Activated CD8-positive, alpha-beta memory T cell treated with anti-CD3 and anti-CD28 coated beads, Interleukin-2, amount 10 ng/mL, durations not matched to agents 7 days and 5 days (primary cell): ENCODE measurements at regions of chr3 and their contacts with region 1.

Region 1: GRCh38 chr3:183884427-183885296 is at the start of gene PARL:
- DNase-seq: peak; percentile 97
- ATAC-seq: peak; percentile 99
- H3K4me3 Mint-ChIP-seq: peak within 1 kb of the TSS; percentile 84
- H3K27ac Mint-ChIP-seq: peak within 1 kb of the TSS; percentile 80
- H3K4me1 Mint-ChIP-seq: peaks cover 26% of the 10 kb centered on the region
- H3K27me3 Mint-ChIP-seq: no peaks in the 10 kb centered on the region
- total RNA-seq, gene PARL: 48.2 to 62.3 TPM

Region 2: GRCh38 chr3:183468424-183468823 is 416.2 kb before region 1 on chr3:
- CTCF ChIA-PET with region 1: interaction called, 14 read pairs
- DNase-seq: no peak
- ATAC-seq: no peak
- H3K4me3 Mint-ChIP-seq: no peak overlapping the region
- H3K27ac Mint-ChIP-seq: peak overlapping the region; percentile 73
- H3K4me1 Mint-ChIP-seq: peaks cover 18% of the 10 kb centered on the region
- H3K27me3 Mint-ChIP-seq: peaks cover 5% of the 10 kb centered on the region

Region 3: DNA sequence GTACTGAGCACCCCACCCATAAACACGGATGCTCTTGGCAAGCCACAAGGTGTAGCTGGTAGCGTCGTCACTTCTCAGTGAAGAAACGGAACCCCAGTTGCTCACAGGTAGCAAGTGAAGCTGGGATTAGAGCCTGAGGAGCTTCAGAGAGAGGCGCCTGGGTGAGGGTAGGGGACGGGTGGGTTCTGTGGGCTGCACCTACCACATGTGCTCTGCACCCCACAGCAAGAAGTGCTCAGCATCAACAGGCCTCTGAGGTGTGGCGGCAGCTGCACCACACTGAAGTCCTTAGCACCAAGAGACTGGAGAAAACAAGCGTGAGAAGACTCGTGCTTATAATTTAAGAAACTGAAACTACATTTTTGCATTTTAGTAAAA is 69.1 kb before region 1 on chr3:
- CTCF ChIA-PET with region 1: interaction called, 11 read pairs
- DNase-seq: peak; percentile 56
- ATAC-seq: peak; percentile 67
- H3K4me3 Mint-ChIP-seq: no peak overlapping the region
- H3K27ac Mint-ChIP-seq: peak overlapping the region; percentile 85
- H3K4me1 Mint-ChIP-seq: peaks cover 23% of the 10 kb centered on the region
- H3K27me3 Mint-ChIP-seq: no peaks in the 10 kb centered on the region

Region 4: GRCh38 chr3:183825456-183826161 is 59.1 kb before region 1 on chr3 and contains the start of gene MAP6D1:
- CTCF ChIA-PET with region 1: interaction called, 23 read pairs
- DNase-seq: peak; percentile 60
- ATAC-seq: peak; percentile 75
- H3K4me3 Mint-ChIP-seq: peak within 1 kb of the TSS; percentile 70
- H3K27ac Mint-ChIP-seq: no peak within 1 kb of the TSS
- H3K4me1 Mint-ChIP-seq: peaks cover 15% of the 10 kb centered on the region
- H3K27me3 Mint-ChIP-seq: peaks cover 16% of the 10 kb centered on the region
- total RNA-seq, gene MAP6D1: 0.47 to 0.70 TPM

Region 5: DNA sequence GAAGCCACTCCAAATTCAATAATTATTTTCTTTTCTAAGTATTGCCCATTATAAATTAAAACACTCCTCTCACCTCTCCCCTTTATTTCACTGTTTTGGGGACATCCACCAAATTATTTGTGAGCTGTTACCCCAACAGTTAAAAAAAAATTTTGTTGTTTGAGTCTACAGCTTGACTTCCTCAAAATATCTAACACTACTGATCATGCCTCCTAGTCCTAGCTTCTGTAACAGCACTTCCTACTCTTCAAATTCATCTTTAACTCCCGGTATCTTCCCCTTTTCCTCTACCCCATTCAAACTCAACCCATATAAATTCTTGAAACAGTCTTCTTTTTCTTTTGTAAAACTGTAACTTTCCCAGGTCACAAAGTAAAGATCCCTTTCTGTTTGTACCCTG is 15.9 kb before region 1 on chr3:
- CTCF ChIA-PET with region 1: interaction called, 13 read pairs
- DNase-seq: no peak
- ATAC-seq: no peak
- H3K4me3 Mint-ChIP-seq: no peak overlapping the region
- H3K27ac Mint-ChIP-seq: no peak overlapping the region
- H3K4me1 Mint-ChIP-seq: peaks cover 14% of the 10 kb centered on the region
- H3K27me3 Mint-ChIP-seq: no peaks in the 10 kb centered on the region

Region 6: DNA sequence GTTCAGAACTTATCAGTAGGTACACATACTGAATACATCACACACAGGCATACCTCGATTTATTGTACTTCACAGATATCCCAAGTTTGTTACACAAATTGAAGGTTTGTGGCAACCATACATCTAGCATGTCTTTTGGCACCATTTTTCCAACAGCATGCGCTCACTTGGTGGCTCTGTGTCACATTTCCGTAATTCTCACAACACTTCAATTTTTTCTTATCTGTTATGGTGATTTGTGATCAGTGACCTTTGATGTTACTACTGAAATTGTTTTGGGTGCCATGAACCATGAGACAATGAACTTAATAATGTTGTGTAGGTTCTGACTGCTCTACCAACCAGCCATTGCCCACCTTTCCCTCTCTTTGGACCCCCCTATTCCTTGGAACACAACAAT is 10.7 kb before region 1 on chr3:
- CTCF ChIA-PET with region 1: interaction called, 13 read pairs
- DNase-seq: no peak
- ATAC-seq: no peak
- H3K4me3 Mint-ChIP-seq: no peak overlapping the region
- H3K27ac Mint-ChIP-seq: no peak overlapping the region
- H3K4me1 Mint-ChIP-seq: peaks cover 16% of the 10 kb centered on the region
- H3K27me3 Mint-ChIP-seq: no peaks in the 10 kb centered on the region

Region 7: DNA sequence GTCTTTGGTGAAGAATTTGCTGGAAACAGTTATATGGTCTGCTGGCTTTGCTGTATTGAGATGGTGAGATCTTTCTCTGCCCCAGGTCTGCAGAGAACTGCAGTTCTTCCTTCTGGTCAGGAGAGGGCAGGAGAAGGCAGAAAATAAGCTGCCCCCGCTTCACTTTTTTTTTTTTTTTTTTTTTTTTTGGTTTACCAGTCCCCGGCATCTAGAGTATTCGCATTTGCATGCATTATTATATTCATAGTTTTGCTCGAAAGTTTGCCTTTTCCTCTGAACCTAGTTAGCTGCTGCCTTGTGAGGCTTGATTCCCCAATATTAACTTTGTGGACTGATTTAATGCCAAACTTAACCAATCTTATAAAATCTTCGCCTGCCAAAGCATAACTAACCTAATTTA is 10.6 kb after region 1 on chr3:
- CTCF ChIA-PET with region 1: interaction called, 35 read pairs
- DNase-seq: peak; percentile 54
- ATAC-seq: peak; percentile 84
- H3K4me3 Mint-ChIP-seq: no peak overlapping the region
- H3K27ac Mint-ChIP-seq: no peak overlapping the region
- H3K4me1 Mint-ChIP-seq: peaks cover 3% of the 10 kb centered on the region
- H3K27me3 Mint-ChIP-seq: peaks cover 19% of the 10 kb centered on the region